Uterus (tissue), 4 donors: ENCODE measurements at regions of chr6 and their contacts with region 1.

Region 1: DNA sequence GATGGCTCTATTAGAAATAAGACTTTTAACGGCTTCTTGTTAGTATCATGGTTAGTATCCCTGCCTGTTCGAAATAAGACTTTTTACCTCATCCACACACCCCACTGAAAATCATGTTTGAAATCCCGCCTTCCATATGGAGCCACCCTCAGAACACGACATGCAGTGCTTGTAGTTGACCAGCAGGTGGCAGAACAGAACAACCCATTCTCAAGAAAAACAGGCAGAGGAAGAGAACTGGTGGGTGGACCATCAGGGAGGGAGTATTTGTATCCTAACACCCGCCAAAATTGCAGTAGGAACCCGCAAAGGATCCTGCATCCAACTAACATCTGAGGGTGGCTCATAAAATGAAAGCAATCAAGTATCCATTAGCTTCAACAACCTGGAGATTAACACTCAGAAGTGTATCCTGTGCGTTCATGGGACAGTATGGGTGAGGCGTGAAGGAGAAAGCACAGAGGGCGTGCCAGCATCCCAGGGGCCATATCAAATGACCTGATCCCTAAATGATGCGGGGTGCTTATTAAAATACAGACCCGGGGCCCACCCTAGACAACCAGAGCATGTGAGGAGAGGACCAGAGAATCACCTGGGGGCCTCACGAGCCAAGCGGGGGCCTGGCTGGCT is 89.6 kb upstream of the NHSL1 start:
- DNase-seq: peak; percentile 55 to 64
- H3K4me3 ChIP-seq: no peak overlapping the region
- H3K27ac ChIP-seq: no peak overlapping the region
- H3K4me1 ChIP-seq: no peaks in the 10 kb centered on the region
- H3K27me3 ChIP-seq: no peaks in the 10 kb centered on the region
- CTCF ChIP-seq: peak; percentile 84 to 88 (median 86)
- POLR2A ChIP-seq: no peak

Region 2: GRCh38 chr6:138622967-138623366 is 34.0 kb after region 1 on chr6:
- intact Hi-C with region 1: no loop called
- DNase-seq: no peak
- H3K4me3 ChIP-seq: no peak overlapping the region
- H3K27ac ChIP-seq: no peak overlapping the region
- H3K4me1 ChIP-seq: no peaks in the 10 kb centered on the region
- H3K27me3 ChIP-seq: no peaks in the 10 kb centered on the region
- CTCF ChIP-seq: no peak
- POLR2A ChIP-seq: no peak

Region 3: GRCh38 chr6:138765896-138766655 is 177.2 kb after region 1 on chr6:
- intact Hi-C with region 1: loop called (anchors 10 kb)
- DNase-seq: no peak
- H3K4me3 ChIP-seq: no peak overlapping the region
- H3K27ac ChIP-seq: no peak overlapping the region
- H3K4me1 ChIP-seq: no peaks in the 10 kb centered on the region
- H3K27me3 ChIP-seq: no peaks in the 10 kb centered on the region
- CTCF ChIP-seq: peak; percentile 59 to 70 (median 63)
- POLR2A ChIP-seq: no peak

Region 4: GRCh38 chr6:139355172-139355571 is 766.3 kb after region 1 on chr6:
- intact Hi-C with region 1: loop called (anchors 10 kb)
- DNase-seq: no peak
- H3K4me3 ChIP-seq: no peak overlapping the region
- H3K27ac ChIP-seq: no peak overlapping the region
- H3K4me1 ChIP-seq: no peaks in the 10 kb centered on the region
- H3K27me3 ChIP-seq: no peaks in the 10 kb centered on the region
- CTCF ChIP-seq: no peak
- POLR2A ChIP-seq: no peak